Activated B cell treated with CpG ODN at 0.5 μM for 24 hours (primary cell): ENCODE measurements at regions of chr3 and their contacts with region 1.

Region 1: DNA sequence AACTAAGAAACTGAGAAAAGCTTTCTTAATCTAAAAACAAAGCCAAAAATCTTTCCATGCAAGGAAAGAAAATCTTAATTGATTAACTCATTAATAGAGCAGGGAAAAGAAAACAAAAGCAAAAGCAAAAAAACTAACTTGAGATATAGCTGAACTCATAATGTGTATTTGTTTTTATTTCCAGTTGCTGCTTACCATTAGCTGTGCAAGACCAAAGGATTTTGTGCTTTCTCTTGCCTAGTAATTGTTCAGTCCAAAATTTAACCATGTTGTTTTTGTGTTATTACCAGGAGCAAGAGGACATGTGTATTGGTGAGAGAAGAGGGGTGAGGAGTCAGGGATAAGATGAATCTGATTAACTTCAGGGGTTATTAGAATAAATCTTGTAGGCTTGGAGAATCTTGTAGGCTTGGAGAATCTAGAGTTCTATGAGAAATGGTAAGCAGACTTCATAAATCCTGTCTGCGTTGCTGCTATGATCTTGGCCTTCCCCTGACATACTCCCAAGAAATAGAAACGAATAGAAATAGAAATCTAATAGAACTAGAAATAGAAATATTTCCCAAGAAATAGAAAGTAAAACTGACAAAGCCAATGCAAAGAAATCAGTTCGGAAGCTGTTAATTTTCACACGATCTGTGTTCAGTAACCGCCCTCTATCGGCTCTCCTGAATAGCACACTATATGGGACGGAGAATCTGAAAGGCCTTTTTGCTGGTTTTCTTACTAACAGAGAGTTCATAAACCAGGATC is 72.6 kb upstream of the TNFSF10 start:
- DNase-seq: no peak
- ATAC-seq: peak; percentile 53
- H3K4me3 Mint-ChIP-seq: peak overlapping the region; percentile 84
- H3K27ac Mint-ChIP-seq: peak overlapping the region; percentile 27
- H3K4me1 Mint-ChIP-seq: peaks cover 39% of the 10 kb centered on the region
- H3K27me3 Mint-ChIP-seq: no peaks in the 10 kb centered on the region
- CTCF ChIP-seq: peak; percentile 92

Region 2: DNA sequence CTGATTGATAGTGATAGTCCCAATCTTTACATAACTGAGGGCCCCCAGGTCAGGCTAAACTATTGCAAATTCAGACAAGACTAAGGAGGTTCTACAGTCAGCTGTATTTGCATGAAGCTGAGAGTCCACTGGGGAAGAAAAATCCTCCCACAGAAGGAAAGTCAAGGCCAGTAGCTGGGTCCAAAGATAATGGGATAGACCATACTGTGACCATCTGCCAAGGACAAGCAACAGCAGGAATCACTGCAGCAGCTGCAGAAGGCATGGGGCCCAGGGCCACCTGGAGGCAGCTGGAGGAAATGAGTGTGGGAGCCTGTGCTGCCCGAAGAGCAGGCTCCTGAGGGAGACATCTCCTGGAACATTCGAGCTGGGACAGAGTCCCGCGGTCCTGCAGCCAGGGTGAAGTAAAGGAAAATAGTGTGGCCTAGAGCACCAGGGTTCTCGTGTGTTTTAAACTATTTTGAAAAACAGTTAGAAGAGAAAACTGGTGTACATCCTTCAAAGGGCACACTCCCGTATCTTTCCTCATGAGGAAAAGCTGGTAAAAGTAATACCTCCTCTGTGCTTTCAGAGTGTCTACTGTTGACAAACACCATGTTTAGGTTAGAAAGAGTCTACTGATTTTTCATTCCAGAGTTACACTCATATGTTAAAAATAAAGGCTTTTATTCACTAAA is 765.8 kb before region 1 on chr3:
- CTCF ChIA-PET with region 1: no interaction called
- POLR2A ChIA-PET with region 1: no interaction called
- intact Hi-C with region 1: no loop called
- DNase-seq: no peak
- ATAC-seq: no peak
- H3K4me3 Mint-ChIP-seq: no peak overlapping the region
- H3K27ac Mint-ChIP-seq: no peak overlapping the region
- H3K4me1 Mint-ChIP-seq: no peaks in the 10 kb centered on the region
- H3K27me3 Mint-ChIP-seq: peaks cover 3% of the 10 kb centered on the region
- CTCF ChIP-seq: no peak

Region 3: GRCh38 chr3:172355839-172356238 is 240.0 kb before region 1 on chr3:
- CTCF ChIA-PET with region 1: no interaction called
- POLR2A ChIA-PET with region 1: no interaction called
- intact Hi-C with region 1: loop called (anchors 5 kb)
- DNase-seq: no peak
- ATAC-seq: no peak
- H3K4me3 Mint-ChIP-seq: no peak overlapping the region
- H3K27ac Mint-ChIP-seq: no peak overlapping the region
- H3K4me1 Mint-ChIP-seq: no peaks in the 10 kb centered on the region
- H3K27me3 Mint-ChIP-seq: no peaks in the 10 kb centered on the region
- CTCF ChIP-seq: no peak

Region 4: GRCh38 chr3:172476347-172476746 is 119.5 kb before region 1 on chr3:
- CTCF ChIA-PET with region 1: interaction called, 15 read pairs
- POLR2A ChIA-PET with region 1: no interaction called
- intact Hi-C with region 1: no loop called
- DNase-seq: no peak
- ATAC-seq: no peak
- H3K4me3 Mint-ChIP-seq: no peak overlapping the region
- H3K27ac Mint-ChIP-seq: no peak overlapping the region
- H3K4me1 Mint-ChIP-seq: peaks cover 7% of the 10 kb centered on the region
- H3K27me3 Mint-ChIP-seq: peaks cover 5% of the 10 kb centered on the region
- CTCF ChIP-seq: no peak

Region 5: DNA sequence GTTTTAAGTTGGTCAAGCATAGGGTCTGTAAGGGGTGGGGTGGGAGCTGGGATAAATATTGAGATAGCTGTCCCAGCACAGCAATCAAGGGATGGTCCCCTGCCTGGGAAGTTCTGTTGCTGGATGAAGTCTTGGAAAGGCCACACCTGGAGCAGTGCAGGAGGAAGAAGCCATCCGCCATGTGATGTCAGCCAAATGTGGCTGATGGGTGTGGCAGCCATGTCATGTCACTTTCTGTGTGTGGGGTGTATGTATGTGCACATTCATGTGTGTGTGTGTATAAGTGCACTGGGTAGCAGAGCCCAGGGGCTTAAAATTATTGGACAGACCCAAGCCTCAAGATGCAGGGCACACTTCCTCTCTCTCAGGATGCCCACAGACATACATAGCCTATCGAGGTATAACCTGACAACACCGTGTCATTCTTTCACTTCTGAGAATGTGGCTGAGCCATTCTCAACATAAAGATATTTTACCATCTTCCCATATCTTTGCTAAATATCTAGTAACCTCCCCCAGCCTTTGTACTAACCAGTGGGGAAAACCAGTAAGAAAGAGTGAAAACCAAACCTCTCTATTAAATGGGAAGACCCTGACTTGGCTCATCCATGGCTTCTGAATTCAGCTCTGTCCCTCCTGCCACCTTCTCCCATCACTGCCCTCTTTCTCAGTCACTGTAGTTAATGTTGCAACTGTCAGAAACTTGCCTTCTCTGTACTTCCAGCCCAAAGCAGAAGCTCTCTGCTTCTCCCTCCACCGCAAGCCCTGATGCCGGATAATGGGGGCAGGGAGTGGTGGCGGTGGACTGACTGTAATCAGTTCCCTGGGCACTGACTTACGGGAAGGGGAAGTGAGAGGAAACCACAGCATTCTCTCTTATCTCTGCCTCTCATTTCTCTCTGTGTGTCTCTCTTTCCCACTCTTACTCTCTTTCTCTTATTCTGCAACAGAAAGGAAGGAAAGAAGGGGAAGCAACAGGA is 83.7 kb before region 1 on chr3:
- CTCF ChIA-PET with region 1: interaction called, 21 read pairs
- POLR2A ChIA-PET with region 1: no interaction called
- intact Hi-C with region 1: loop called (anchors 2 kb)
- DNase-seq: no peak
- ATAC-seq: peak; percentile 79
- H3K4me3 Mint-ChIP-seq: peak overlapping the region; percentile 57
- H3K27ac Mint-ChIP-seq: peak overlapping the region; percentile 84
- H3K4me1 Mint-ChIP-seq: peaks cover 64% of the 10 kb centered on the region
- H3K27me3 Mint-ChIP-seq: no peaks in the 10 kb centered on the region
- CTCF ChIP-seq: no peak

Region 6: GRCh38 chr3:172573422-172573821 is 22.4 kb before region 1 on chr3:
- CTCF ChIA-PET with region 1: no interaction called
- POLR2A ChIA-PET with region 1: no interaction called
- intact Hi-C with region 1: no loop called
- DNase-seq: no peak
- ATAC-seq: no peak
- H3K4me3 Mint-ChIP-seq: no peak overlapping the region
- H3K27ac Mint-ChIP-seq: no peak overlapping the region
- H3K4me1 Mint-ChIP-seq: peaks cover 11% of the 10 kb centered on the region
- H3K27me3 Mint-ChIP-seq: no peaks in the 10 kb centered on the region
- CTCF ChIP-seq: no peak

Region 7: DNA sequence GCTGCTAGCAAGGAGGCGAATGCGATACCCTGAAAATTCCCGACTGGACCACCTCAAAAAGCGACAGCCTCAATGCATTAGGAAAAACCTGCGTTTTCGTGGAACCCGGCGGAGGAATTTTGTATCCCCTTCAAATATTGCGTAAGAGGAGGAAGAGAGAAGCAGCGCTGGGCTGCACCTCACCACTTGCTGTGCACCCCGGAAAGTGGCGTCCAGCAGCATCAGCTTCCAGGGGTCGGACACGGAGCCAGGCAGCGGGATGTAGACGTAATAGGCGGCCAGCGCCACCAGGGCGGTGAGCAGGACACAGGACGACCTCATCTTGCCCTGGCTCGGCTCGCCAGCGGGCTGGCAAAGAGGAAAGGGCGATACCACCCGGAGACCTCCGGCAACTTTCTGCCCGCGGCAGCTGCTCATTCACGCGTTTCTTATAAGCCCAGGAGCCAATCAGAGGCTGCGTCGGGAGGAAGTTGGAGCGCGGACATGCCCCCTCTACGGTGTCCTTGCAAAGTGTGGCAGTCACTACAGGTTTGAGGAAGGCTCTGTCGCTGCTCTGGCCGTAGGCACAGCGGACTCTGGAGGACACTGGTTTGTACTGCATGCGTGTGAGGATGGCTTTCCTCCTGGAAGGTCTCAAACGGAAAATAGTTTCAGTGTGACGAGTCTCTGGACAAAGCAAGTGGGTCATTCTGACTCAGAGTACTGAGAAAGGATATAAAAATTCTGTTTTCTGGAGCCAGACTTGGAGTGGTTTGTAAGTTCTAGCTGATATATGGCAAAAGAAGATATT is 115.0 kb after region 1 on chr3 and contains the start of gene NCEH1:
- CTCF ChIA-PET with region 1: interaction called, 4 read pairs
- POLR2A ChIA-PET with region 1: no interaction called
- intact Hi-C with region 1: loop called (anchors 5 kb)
- DNase-seq: peak; percentile 70
- ATAC-seq: peak; percentile 100
- H3K4me3 Mint-ChIP-seq: peak within 1 kb of the TSS; percentile 97
- H3K27ac Mint-ChIP-seq: peak within 1 kb of the TSS; percentile 83
- H3K4me1 Mint-ChIP-seq: peaks cover 22% of the 10 kb centered on the region
- H3K27me3 Mint-ChIP-seq: no peaks in the 10 kb centered on the region
- CTCF ChIP-seq: no peak
- total RNA-seq, gene NCEH1: 4.5 and 4.9 TPM in 2 replicates